CD8-positive, alpha-beta T cell (primary cell): ENCODE measurements at regions of chr1 and their contacts with region 1.

Region 1: DNA sequence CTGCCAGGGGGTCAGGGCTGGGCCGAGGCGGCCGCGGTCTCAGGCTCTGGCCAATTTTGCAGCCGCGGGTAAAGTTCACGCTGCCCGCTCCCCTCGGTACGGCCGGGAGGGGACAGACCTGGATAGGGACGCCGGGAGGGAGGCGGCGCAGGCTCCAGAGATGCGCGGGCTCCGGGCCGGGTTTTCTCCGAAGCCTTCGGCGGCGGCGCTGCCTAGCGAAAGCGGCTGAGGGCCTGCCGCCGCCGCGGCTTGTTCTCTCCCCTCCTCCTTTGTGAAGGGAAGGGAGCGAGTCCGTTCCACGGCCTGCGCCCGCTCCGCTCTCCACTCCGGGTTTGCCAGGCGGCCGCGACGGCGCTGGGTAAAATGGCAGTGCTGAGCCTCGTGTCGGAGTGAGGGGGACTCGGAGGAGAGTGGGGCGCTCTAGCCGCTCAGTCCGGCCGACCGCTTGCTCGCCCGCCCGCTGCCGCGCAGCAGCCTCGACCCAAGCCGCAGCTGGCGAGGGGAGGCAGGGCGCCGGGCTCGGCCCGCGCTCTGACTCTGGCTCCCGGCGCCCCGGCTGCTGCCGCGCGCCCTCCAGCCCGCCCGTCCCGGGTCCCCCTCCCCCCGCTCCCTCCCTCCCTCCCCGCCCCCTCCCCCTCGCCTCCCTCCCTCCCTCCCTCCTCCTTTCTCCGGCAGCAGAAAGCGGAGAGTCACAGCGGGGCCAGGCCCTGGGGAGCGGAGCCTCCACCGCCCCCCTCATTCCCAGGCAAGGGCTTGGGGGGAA is at the start of gene ARID1A:
- DNase-seq: peak; percentile 92 to 98 (median 95)
- ATAC-seq: peak; percentile 59
- H3K4me3 ChIP-seq: peak within 1 kb of the TSS; percentile 74 to 86
- H3K4me3 Mint-ChIP-seq: peak within 1 kb of the TSS; percentile 93
- H3K27ac ChIP-seq: peak within 1 kb of the TSS; percentile 44 to 72
- H3K27ac Mint-ChIP-seq: peak within 1 kb of the TSS; percentile 94
- H3K4me1 ChIP-seq: peaks cover 51% of the 10 kb centered on the region
- H3K4me1 Mint-ChIP-seq: peaks cover 35% of the 10 kb centered on the region
- H3K27me3 ChIP-seq: no peaks in the 10 kb centered on the region
- H3K27me3 Mint-ChIP-seq: no peaks in the 10 kb centered on the region
- CTCF ChIP-seq: no peak
- total RNA-seq, gene ARID1A: 104 to 105 TPM

Region 2: DNA sequence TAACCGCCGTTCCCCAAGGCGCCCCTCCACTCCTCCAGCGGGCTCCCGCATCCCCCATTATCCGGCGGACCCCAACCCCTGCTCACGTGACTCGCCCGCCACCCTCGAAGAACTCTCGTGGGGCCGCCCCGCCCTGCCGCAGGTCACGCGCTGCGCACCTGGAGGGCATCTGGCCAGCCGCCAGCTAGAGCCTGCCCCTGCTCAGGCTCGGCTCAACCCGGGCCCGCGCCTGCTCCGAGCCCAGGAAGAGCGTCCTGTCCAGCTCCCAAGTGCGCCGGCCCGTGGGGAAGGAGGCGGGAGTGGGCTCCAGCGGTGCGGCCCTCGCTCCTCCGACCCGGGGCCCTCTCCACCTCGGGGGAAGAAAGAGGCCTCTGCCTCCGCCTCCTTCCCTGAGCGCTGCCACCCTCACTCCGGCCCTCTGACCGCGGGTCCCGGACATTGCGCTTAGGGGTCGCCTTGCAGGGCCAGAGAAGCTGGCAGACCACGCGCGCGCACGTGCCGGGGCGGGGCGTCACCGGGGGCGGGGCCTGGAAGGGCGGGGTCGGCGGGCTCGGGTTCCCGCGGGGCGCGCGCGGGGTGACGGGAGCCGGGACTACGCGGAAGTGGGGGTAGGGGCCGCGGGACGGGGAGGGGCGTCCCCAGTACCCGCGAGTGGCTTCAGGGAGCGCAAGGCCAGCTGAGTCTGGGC is 194.9 kb before region 1 on chr1:
- CTCF ChIA-PET with region 1: interaction called, 4 read pairs
- POLR2A ChIA-PET with region 1: interaction called, 13 read pairs
- intact Hi-C with region 1: no loop called
- DNase-seq: peak; percentile 74 to 95 (median 89)
- ATAC-seq: peak; percentile 75
- H3K4me3 ChIP-seq: peak overlapping the region; percentile 67 to 96
- H3K4me3 Mint-ChIP-seq: peak overlapping the region; percentile 84
- H3K27ac ChIP-seq: peak overlapping the region; percentile 84 to 89
- H3K27ac Mint-ChIP-seq: peak overlapping the region; percentile 89
- H3K4me1 ChIP-seq: peaks cover 13% of the 10 kb centered on the region
- H3K4me1 Mint-ChIP-seq: peaks cover 15% of the 10 kb centered on the region
- H3K27me3 ChIP-seq: no peaks in the 10 kb centered on the region
- H3K27me3 Mint-ChIP-seq: no peaks in the 10 kb centered on the region
- CTCF ChIP-seq: peak; percentile 15

Region 3: DNA sequence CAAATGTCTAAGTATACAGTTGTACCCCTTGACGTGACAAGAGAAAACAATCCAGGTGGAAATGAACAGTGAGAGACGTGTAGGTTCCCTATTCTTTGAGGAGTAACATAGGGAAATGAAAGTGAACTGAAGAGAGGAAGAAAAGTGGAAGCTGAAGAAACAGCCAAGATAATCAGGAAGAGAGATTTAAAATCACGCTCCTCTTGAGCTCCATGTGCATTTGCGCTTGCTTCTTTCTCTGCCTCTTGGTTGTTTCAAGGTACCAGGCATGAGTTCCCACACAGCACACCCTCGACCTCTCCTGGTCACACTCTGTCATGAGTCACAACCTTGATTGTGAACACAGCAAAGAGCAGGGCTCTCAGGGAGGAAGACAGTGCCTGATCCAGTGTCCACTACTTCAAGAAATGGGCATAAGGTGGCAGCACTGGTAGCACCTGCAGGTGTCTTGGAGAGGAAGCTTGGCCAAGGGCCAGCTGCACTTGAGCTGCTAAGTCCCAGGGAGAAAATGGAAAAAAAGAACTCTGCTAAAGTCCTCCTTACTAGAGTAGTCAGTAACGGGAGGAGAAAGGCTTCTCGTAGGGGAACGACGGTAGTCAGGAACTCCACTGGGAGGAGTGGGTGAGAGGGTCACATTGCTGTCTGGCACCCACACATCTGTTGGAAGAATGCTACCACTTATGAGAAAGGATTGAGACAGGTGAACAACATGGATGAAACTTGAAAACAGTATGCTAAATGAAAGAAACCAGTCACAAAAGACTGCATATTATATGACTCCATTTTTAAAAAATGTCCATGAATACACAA is 18.0 kb before region 1 on chr1:
- CTCF ChIA-PET with region 1: interaction called, 31 read pairs
- POLR2A ChIA-PET with region 1: interaction called, 9 read pairs
- intact Hi-C with region 1: loop called in 1 of 2 experiments (anchors 1 kb)
- DNase-seq: peak; percentile 16 to 82 (median 55)
- ATAC-seq: peak; percentile 94
- H3K4me3 ChIP-seq: no peak overlapping the region
- H3K4me3 Mint-ChIP-seq: peak overlapping the region; percentile 29
- H3K27ac ChIP-seq: no peak overlapping the region
- H3K27ac Mint-ChIP-seq: peak overlapping the region; percentile 23
- H3K4me1 ChIP-seq: peaks cover 11% of the 10 kb centered on the region
- H3K4me1 Mint-ChIP-seq: peaks cover 18% of the 10 kb centered on the region
- H3K27me3 ChIP-seq: no peaks in the 10 kb centered on the region
- H3K27me3 Mint-ChIP-seq: no peaks in the 10 kb centered on the region
- CTCF ChIP-seq: peak; percentile 48

Region 4: DNA sequence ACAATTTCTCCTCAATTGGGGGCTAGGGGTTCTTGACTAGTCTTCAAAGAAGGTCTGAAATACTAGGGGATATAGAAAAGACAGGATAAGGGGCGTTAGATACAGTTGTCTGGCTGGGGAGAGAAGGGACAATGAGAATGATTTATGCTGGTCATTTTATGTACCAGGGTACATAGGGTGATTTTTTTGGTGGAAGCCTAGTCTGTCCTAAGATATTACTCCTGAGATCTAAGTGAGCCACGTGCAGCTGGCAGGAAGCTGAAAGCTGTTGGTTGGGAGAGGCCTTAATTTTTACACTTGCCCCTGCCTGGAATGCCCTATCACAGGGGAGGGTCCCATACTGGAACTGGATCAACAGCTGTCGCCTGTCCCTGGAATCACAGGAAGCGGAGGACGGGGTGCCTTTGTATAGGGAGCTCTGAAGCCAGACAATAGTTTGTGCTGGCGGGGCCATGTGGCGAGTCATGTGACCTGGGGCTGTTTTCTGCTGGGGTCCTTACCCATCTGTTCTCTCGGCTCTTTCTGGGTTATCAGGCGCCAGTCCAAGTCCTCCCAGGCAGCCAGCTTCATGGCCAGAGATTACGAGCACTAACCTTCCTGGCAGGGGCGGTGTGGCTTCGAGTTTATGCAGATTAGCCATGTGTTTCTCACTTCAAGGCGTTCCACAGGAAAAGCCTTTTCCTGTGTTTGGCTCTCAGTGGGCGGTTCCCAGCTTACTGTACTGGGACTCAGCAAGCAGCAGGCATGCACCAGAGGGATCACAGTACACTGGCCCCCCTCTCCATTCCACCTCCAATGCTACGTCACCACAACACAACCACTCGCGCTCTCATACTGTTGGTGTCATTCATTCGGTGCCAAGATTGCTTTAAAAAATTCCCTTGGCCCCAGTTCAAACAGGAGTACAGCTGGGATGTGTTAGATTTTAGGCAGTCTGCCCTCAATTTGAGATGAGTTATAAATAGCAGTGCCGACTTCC is 27.8 kb after region 1 on chr1:
- CTCF ChIA-PET with region 1: interaction called, 4 read pairs
- POLR2A ChIA-PET with region 1: interaction called, 22 read pairs
- intact Hi-C with region 1: loop called in 1 of 2 experiments (anchors 2 kb)
- DNase-seq: peak in 8 of 9 experiments; percentile 21 to 82 (median 54)
- ATAC-seq: peak; percentile 79
- H3K4me3 ChIP-seq: peak overlapping the region; percentile 10 to 13
- H3K4me3 Mint-ChIP-seq: peak overlapping the region; percentile 63
- H3K27ac ChIP-seq: peak overlapping the region in 1 of 2 experiments; percentile 54
- H3K27ac Mint-ChIP-seq: peak overlapping the region; percentile 88
- H3K4me1 ChIP-seq: peaks cover 91% of the 10 kb centered on the region
- H3K4me1 Mint-ChIP-seq: peaks cover 93% of the 10 kb centered on the region
- H3K27me3 ChIP-seq: no peaks in the 10 kb centered on the region
- H3K27me3 Mint-ChIP-seq: no peaks in the 10 kb centered on the region
- CTCF ChIP-seq: no peak

Region 5: GRCh38 chr1:26780344-26780957 is 84.9 kb after region 1 on chr1:
- CTCF ChIA-PET with region 1: interaction called, 126 read pairs
- POLR2A ChIA-PET with region 1: interaction called, 224 read pairs
- intact Hi-C with region 1: no loop called
- DNase-seq: no peak
- ATAC-seq: no peak
- H3K4me3 ChIP-seq: no peak overlapping the region
- H3K4me3 Mint-ChIP-seq: no peak overlapping the region
- H3K27ac ChIP-seq: no peak overlapping the region
- H3K27ac Mint-ChIP-seq: peak overlapping the region; percentile 55
- H3K4me1 ChIP-seq: peaks cover 12% of the 10 kb centered on the region
- H3K4me1 Mint-ChIP-seq: peaks cover 53% of the 10 kb centered on the region
- H3K27me3 ChIP-seq: no peaks in the 10 kb centered on the region
- H3K27me3 Mint-ChIP-seq: no peaks in the 10 kb centered on the region
- CTCF ChIP-seq: no peak

Region 6: DNA sequence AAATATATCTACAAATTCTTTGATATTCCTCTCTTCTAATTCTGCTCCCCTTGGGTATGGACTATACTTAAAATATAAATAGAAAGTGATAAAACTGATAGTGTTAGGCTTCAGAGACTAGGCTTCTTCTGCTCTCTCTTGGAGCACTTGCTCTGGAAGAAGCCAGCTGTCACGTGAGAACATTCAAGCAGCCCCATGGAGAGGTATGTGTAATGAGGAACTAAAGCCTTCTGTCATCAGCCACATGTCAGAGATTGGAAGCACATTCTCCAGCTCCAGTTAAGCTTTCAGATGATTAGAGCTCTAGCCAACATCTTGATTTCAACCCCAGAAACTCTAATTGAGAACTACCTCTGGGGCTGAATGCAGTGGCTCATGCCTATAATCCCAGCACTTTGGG is 1298.5 kb after region 1 on chr1:
- CTCF ChIA-PET with region 1: no interaction called
- POLR2A ChIA-PET with region 1: no interaction called
- intact Hi-C with region 1: no loop called
- DNase-seq: no peak
- ATAC-seq: no peak
- H3K4me3 ChIP-seq: no peak overlapping the region
- H3K4me3 Mint-ChIP-seq: no peak overlapping the region
- H3K27ac ChIP-seq: no peak overlapping the region
- H3K27ac Mint-ChIP-seq: no peak overlapping the region
- H3K4me1 ChIP-seq: peaks cover 8% of the 10 kb centered on the region
- H3K4me1 Mint-ChIP-seq: peaks cover 23% of the 10 kb centered on the region
- H3K27me3 ChIP-seq: no peaks in the 10 kb centered on the region
- H3K27me3 Mint-ChIP-seq: no peaks in the 10 kb centered on the region
- CTCF ChIP-seq: no peak